ENCODE measurements at regions of chr1 and their contacts with region 1.

Region 1: GRCh38 chr1:28736450-28737306 is at the start of gene YTHDF2:
- DNase-seq: peak; percentile 67
- H3K4me3 ChIP-seq: peak within 1 kb of the TSS; percentile 91
- H3K27me3 ChIP-seq: no peaks in the 10 kb centered on the region
- CTCF ChIP-seq: peak; percentile 92
- polyA plus RNA-seq, gene YTHDF2: 45.9 and 68.2 TPM in 2 replicates

Region 2: DNA sequence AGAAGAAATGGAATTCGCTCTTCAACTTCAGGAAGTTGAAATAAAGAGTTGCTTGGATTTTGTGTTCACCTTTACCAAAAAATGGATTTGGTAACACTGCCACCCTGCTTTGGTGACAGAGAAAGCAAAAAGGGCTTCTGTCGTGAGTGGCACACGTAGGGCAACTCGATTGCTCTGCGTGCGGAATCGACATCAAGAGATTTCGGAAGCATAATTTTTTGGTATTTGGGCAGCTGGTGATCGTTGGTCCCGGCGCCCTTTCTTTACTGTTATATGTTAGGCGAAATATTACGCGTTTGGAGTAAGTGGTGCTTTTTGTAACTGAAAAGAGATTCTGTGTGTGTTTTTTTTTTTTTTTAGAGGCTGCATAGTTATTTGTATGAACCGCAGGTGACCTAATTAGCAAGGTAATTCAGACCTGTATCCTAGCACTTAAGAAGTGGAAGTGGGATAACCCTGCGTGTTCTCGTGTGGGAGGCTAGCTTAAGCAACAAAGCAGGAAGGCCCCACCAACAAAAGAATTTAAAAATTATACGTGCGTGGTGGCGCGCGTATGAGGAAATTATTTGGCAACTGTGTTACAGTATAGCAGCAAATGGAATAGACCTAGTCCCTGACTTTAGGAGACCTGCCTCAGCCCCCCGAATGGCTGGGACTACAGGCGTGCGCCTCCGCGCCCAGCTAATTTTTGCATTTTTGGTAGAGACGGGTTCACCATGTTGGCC is 88.0 kb before region 1 on chr1 and contains the start of gene RNU11:
- CTCF ChIA-PET with region 1: interaction called, 5 read pairs
- POLR2A ChIA-PET with region 1: interaction called, 18 read pairs
- DNase-seq: peak; percentile 87
- H3K4me3 ChIP-seq: peak within 1 kb of the TSS; percentile 42
- H3K27me3 ChIP-seq: no peaks in the 10 kb centered on the region
- CTCF ChIP-seq: no peak
- polyA plus RNA-seq, gene RNU11: not detected in 2 replicates

Region 3: GRCh38 chr1:28718586-28719331 is 17.9 kb before region 1 on chr1:
- CTCF ChIA-PET with region 1: interaction called, 35 read pairs
- POLR2A ChIA-PET with region 1: no interaction called
- DNase-seq: no peak
- H3K4me3 ChIP-seq: no peak overlapping the region
- H3K27me3 ChIP-seq: no peaks in the 10 kb centered on the region
- CTCF ChIP-seq: no peak

Region 4: DNA sequence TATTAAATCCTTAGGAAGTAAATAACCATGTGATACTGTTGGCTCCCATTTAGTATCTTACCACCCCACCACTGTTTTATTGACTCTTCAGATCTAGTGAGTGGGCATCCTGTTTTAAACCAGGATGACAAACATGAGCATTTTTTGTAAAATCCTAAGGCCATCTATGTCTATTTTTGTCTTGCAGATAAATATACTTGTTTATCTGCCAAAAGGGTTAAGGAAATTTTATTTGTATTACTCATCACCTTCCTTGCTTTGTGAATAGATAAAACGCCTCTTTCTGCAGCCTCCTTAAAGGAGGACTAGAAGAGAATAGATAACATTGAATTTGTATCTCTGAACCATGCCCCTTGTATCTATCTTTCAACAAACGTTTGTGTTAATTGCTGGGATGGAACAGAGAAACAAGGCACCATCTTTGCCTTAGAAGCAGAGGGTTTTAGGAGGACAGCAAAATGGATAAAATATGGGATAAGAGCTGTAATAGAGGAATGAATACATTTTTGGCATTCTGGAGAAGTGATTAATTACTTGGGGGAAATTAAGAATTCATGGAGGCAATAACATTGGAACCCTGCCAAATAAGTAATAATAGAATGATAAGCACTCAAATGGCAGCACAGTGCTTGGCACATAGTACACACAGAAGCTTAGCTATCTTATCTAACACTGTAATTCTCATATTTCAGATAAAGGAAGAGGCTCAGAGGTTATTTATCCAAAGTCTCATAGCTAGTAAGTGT is 14.8 kb after region 1 on chr1:
- CTCF ChIA-PET with region 1: interaction called, 14 read pairs
- POLR2A ChIA-PET with region 1: interaction called, 8 read pairs
- DNase-seq: peak; percentile 27
- H3K4me3 ChIP-seq: no peak overlapping the region
- H3K27me3 ChIP-seq: no peaks in the 10 kb centered on the region
- CTCF ChIP-seq: no peak

Region 5: DNA sequence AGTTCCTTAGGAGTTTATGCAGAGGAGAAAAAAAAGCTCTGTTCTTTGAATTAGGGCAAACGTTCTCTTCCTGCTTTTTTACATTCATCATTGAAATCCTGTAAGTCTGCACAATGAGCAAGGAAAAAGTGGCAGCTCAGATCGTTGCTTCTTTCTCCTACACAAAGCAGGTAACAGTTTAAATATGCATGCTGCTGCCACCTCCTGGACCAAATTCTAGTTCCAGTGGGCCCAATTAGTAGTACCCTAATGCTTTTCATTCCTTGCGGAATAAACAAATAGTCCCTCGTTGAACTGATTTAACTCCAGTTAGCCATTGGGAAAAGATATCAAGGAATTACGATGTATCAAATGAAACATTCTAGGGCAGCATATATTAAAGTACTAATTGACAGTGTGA is 20.2 kb after region 1 on chr1:
- CTCF ChIA-PET with region 1: interaction called, 14 read pairs
- POLR2A ChIA-PET with region 1: interaction called, 8 read pairs
- DNase-seq: no peak
- H3K4me3 ChIP-seq: no peak overlapping the region
- H3K27me3 ChIP-seq: no peaks in the 10 kb centered on the region
- CTCF ChIP-seq: peak; percentile 19; the same call in 1 of the 2 replicates